IMR-90 (cell line): ENCODE measurements at regions of chr10 and their contacts with region 1.

Region 1: GRCh38 chr10:43348511-43349312 is 22.7 kb upstream of the FXYD4 start:
- DNase-seq: peak; percentile 68
- ATAC-seq: peak; percentile 100
- H3K4me3 ChIP-seq: no peak overlapping the region
- H3K27ac ChIP-seq: no peak overlapping the region
- H3K4me1 ChIP-seq: no peaks in the 10 kb centered on the region
- H3K27me3 ChIP-seq: peaks cover 16% of the 10 kb centered on the region; the same call in 1 of the 2 replicates
- CTCF ChIP-seq: peak; percentile 92
- POLR2A ChIP-seq: no peak
- RAD21 ChIP-seq: peak; percentile 86

Region 2: DNA sequence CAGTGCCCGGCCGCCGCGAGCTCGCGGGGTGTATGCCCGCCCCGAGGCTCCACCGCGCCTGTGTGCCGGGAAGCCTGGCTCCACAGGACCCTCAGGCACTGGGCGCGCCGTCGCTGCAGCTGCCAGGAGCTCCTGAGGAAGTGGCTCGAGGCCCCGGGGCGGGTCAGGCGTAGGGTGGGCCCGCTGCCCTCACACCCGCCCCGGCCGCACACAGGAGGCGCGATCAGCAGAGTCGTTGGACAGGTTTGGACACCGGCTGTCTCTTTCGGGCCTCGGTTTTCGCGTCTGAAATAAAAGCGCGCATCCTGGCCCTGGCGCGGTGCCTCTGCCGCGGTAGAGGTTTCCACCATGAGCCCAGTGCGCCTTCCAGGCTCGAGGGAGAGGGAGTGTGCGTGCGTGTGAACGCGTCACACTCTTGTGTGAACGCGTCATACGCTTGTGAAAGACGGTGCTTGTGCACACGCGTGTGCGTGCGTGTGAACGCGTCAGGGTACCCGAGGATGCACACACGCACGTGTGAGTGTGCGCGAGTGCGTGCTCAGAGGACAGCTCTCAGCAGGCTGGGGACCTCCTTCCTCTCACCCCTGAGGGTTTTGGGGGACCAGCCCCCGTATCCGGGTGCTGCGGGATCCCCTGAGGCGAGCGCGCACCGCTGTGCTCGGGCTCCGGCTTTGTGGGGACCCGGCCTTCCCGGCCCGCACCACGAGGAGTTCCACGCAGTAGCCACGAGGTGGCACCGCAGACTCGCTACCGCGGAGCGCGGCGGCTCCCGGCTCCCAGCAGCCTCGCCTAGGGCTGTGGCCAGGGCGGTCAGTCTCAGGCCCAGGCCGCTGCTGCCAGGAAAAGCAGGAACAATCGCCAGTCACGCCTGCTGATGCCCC is 482.4 kb before region 1 on chr10:
- CTCF ChIA-PET with region 1: no interaction called
- POLR2A ChIA-PET with region 1: no interaction called
- dilution Hi-C with region 1: no loop called
- in situ Hi-C with region 1: no loop called
- intact Hi-C with region 1: loop called (anchors 1 kb)
- DNase-seq: peak; percentile 64
- ATAC-seq: peak; percentile 100
- H3K4me3 ChIP-seq: peak overlapping the region; percentile 5; the same call in 1 of the 2 replicates
- H3K27ac ChIP-seq: no peak overlapping the region
- H3K4me1 ChIP-seq: no peaks in the 10 kb centered on the region
- H3K27me3 ChIP-seq: peaks cover 26% of the 10 kb centered on the region
- CTCF ChIP-seq: peak; percentile 74
- POLR2A ChIP-seq: no peak
- RAD21 ChIP-seq: peak; percentile 86

Region 3: DNA sequence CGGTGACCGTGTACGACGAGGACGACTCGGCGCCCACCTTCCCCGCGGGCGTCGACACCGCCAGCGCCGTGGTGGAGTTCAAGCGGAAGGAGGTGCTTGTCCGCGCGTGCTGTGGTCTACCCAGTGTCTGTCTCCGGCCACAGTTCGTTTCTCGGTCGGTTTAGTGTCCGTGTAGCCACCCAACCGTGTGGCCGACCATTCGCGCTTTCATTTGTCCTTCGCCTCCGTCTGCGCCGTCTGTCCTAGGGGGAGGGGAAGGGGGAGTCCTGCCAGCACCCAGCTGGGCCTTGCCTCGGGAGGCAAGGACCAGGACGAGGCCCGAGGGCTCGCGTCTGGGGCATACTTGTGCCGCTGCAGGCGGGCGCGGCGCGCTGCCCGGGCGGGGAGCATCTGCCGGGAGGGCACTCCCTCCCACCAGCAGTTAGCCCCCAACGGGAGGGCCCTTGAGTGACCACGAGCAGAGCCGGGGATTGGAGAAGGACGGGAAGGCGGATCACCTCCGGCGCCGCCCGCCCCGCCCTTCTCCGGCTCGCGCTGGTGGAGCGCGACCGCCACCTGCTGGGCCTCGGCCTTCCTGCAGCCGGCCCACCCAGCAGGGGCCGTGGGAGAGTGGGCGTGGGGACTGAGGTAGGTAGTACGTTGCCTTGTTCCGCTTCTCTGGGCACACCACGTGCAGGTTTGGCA is 243.5 kb before region 1 on chr10:
- CTCF ChIA-PET with region 1: no interaction called
- POLR2A ChIA-PET with region 1: no interaction called
- dilution Hi-C with region 1: no loop called
- in situ Hi-C with region 1: no loop called
- intact Hi-C with region 1: loop called (anchors 2 kb)
- DNase-seq: peak; percentile 63
- ATAC-seq: peak; percentile 98
- H3K4me3 ChIP-seq: peak overlapping the region; percentile 46
- H3K27ac ChIP-seq: no peak overlapping the region
- H3K4me1 ChIP-seq: peaks cover 3% of the 10 kb centered on the region; the same call in 1 of the 2 replicates
- H3K27me3 ChIP-seq: peaks cover 27% of the 10 kb centered on the region
- CTCF ChIP-seq: peak; percentile 98
- POLR2A ChIP-seq: peak; percentile 51; the same call in 1 of the 2 replicates
- RAD21 ChIP-seq: peak; percentile 96

Region 4: DNA sequence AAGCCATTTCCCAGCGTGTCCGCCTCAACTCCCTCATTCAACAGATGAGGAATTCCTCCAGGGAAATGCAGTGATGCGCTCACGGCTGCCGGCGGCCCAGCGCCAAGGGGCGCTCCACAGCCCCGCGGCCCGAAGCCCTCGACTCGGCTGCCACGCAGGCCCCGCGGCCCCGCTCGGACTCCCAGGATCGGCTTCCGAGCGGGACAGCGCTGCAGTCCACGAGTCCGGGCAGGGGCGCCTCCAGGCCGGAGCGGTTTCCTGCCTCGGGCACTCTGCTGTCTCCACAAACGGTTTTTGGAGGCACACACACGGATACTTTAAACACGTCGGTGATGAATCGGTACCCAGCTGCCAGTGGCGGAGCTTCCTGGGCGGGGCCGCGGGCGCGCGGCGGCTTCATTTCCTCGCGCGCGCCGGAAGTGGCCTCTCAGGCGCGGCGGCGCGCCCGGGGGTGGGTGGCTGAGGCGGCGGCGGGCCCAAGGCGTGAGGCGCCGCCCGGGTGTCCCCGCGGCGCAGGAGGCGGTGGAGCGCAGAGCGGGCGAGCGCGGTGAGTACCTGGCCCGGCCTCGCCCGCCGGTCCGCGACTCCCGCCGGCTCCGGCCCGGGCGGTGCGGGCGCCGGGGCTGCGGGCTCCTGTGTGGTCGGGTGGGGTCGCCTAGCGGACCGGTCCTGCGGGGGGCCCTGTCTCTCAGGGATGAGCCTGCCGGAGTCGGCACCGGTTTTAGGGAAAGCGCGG is 210.5 kb before region 1 on chr10 and contains the start of gene CSGALNACT2:
- CTCF ChIA-PET with region 1: no interaction called
- POLR2A ChIA-PET with region 1: no interaction called
- dilution Hi-C with region 1: no loop called
- in situ Hi-C with region 1: no loop called
- intact Hi-C with region 1: loop called (anchors 1 kb)
- DNase-seq: peak; percentile 86
- ATAC-seq: peak; percentile 68
- H3K4me3 ChIP-seq: peak within 1 kb of the TSS; percentile 98
- H3K27ac ChIP-seq: peak within 1 kb of the TSS; percentile 94
- H3K4me1 ChIP-seq: peaks cover 6% of the 10 kb centered on the region
- H3K27me3 ChIP-seq: no peaks in the 10 kb centered on the region; the same call in 1 of the 2 replicates
- CTCF ChIP-seq: 0 out of 2 replicates have a peak, but pooled peaks have one; percentile 5
- POLR2A ChIP-seq: peak; percentile 84
- RAD21 ChIP-seq: no peak
- total RNA-seq, gene CSGALNACT2: 6.5 and 11.4 TPM in 2 replicates

Region 5: GRCh38 chr10:43204943-43205671 is 143.6 kb before region 1 on chr10:
- CTCF ChIA-PET with region 1: no interaction called
- POLR2A ChIA-PET with region 1: no interaction called
- dilution Hi-C with region 1: no loop called
- in situ Hi-C with region 1: no loop called
- intact Hi-C with region 1: loop called (anchors 10 kb)
- DNase-seq: peak; percentile 48
- ATAC-seq: peak; percentile 80
- H3K4me3 ChIP-seq: no peak overlapping the region
- H3K27ac ChIP-seq: no peak overlapping the region
- H3K4me1 ChIP-seq: no peaks in the 10 kb centered on the region; the same call in 1 of the 2 replicates
- H3K27me3 ChIP-seq: peaks cover 3% of the 10 kb centered on the region; the same call in 1 of the 2 replicates
- CTCF ChIP-seq: peak; percentile 63
- POLR2A ChIP-seq: no peak
- RAD21 ChIP-seq: peak; percentile 44

Region 6: DNA sequence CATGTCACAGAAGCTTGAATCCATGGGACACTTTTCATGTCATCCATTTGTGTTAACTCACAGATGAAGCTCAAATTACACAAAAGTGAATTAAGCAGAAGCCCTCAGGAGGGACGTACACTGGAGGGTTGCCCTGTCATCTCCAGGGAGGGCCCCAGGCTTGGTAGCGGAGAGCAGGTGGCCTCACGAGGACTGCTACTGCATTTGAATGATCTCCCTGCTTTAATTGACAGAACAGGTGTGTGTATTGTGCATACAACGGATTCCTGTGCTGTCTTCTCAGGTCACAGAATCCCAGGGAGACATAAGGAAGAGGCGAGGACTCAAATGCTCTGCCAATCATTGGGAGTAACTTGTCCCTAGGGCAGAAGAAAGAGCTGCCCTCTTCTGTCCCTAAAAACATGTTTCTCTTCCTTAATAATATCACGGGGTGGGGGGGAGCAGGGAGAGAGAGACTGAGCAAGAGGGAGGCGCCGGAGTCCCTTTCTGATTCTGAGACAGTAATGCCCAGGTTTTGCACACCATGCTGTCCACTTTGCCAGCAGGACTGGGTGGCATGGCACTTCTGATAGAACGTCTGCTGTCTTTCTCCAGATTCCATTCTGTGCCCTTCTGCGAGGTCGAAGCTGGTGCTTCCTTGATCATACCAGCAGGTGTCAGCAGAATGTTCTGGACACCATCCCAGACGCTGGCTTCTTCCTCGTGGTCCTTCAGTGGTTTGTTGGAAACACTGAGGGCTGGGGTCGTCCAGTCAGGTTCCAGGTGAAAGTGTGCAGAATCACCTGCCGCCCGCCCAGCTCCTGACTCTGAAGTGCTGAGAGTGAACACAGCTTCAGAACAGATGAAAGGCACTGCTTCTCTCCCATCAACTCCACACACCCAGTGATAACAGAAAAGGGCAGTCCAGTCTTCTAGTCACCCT is 55.7 kb before region 1 on chr10:
- CTCF ChIA-PET with region 1: no interaction called
- POLR2A ChIA-PET with region 1: no interaction called
- dilution Hi-C with region 1: no loop called
- in situ Hi-C with region 1: no loop called
- intact Hi-C with region 1: loop called (anchors 1 kb)
- DNase-seq: peak; percentile 41
- ATAC-seq: peak; percentile 87
- H3K4me3 ChIP-seq: no peak overlapping the region
- H3K27ac ChIP-seq: no peak overlapping the region
- H3K4me1 ChIP-seq: no peaks in the 10 kb centered on the region
- H3K27me3 ChIP-seq: peaks cover 8% of the 10 kb centered on the region
- CTCF ChIP-seq: peak; percentile 64
- POLR2A ChIP-seq: no peak
- RAD21 ChIP-seq: peak; percentile 56

Region 7: DNA sequence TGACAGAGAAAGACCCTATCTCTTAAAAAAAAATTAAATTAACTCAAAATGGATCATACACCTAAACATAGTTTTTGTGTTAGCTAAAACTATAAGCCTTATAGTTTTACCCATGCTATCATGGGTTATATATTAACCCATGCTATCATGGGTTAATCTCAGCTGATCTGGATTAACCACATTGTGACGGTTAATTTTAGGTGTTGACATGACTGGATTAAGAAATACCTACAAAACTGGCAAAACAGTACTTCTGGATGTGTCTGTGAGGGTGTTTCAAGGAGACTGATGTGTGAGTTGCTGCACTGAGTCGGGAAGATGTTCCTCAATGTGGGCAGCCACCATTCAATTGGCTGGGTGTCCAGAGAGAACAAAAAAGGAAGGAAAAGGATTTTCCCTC is 21.5 kb before region 1 on chr10:
- CTCF ChIA-PET with region 1: no interaction called
- POLR2A ChIA-PET with region 1: no interaction called
- dilution Hi-C with region 1: no loop called
- in situ Hi-C with region 1: no loop called
- intact Hi-C with region 1: no loop called
- DNase-seq: no peak
- ATAC-seq: no peak
- H3K4me3 ChIP-seq: no peak overlapping the region
- H3K27ac ChIP-seq: no peak overlapping the region
- H3K4me1 ChIP-seq: no peaks in the 10 kb centered on the region
- H3K27me3 ChIP-seq: peaks cover 13% of the 10 kb centered on the region
- CTCF ChIP-seq: no peak
- POLR2A ChIP-seq: no peak
- RAD21 ChIP-seq: no peak

Region 8: DNA sequence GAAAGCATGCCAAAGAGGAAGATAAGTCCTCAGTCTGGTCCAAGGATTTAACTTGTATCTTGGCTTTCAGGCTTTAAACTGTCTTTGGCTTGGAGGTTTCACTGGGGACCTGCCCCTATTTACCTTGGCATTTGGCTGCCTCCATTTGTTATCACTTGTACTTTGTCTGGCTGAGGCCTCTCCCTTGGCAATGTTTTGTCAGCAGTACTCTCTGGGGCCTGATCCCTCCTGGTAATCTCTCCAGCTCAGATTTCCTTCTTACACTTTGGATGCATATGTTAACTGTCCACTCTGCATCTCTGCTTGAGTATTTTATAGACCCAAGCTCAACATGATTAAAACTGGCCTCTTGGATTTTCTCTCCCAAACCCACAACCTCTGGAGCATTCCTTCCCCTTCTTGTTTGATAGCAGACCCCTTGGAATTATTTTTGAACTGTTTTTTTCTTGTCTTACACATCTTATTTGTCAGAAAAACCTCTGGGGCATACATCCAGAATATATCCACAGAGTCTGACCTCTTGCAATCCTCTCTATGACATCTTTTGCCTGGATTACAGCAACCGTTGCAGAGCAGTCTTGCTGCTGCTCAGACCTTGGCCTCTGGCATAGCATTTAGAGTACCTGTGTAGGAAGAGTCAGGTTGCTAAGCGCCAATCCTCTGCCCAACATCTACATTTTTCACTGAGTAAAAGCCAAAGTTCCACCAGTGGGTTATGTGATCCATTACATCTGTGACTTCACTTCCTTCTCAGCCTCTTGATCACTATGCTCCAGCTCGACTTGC is 123.4 kb after region 1 on chr10:
- CTCF ChIA-PET with region 1: no interaction called
- POLR2A ChIA-PET with region 1: no interaction called
- dilution Hi-C with region 1: no loop called
- in situ Hi-C with region 1: no loop called
- intact Hi-C with region 1: no loop called
- DNase-seq: no peak
- ATAC-seq: no peak
- H3K4me3 ChIP-seq: no peak overlapping the region
- H3K27ac ChIP-seq: no peak overlapping the region
- H3K4me1 ChIP-seq: no peaks in the 10 kb centered on the region
- H3K27me3 ChIP-seq: no peaks in the 10 kb centered on the region
- CTCF ChIP-seq: no peak
- POLR2A ChIP-seq: no peak
- RAD21 ChIP-seq: no peak

Region 9: GRCh38 chr10:43524434-43525247 is 175.9 kb after region 1 on chr10:
- CTCF ChIA-PET with region 1: no interaction called
- POLR2A ChIA-PET with region 1: no interaction called
- dilution Hi-C with region 1: no loop called
- in situ Hi-C with region 1: no loop called
- intact Hi-C with region 1: no loop called
- DNase-seq: no peak
- ATAC-seq: no peak
- H3K4me3 ChIP-seq: no peak overlapping the region
- H3K27ac ChIP-seq: no peak overlapping the region
- H3K4me1 ChIP-seq: no peaks in the 10 kb centered on the region
- H3K27me3 ChIP-seq: no peaks in the 10 kb centered on the region
- CTCF ChIP-seq: no peak
- POLR2A ChIP-seq: no peak
- RAD21 ChIP-seq: no peak